WTC11 (cell line): ENCODE measurements at regions of chr20 and their contacts with region 1.

Region 1: DNA sequence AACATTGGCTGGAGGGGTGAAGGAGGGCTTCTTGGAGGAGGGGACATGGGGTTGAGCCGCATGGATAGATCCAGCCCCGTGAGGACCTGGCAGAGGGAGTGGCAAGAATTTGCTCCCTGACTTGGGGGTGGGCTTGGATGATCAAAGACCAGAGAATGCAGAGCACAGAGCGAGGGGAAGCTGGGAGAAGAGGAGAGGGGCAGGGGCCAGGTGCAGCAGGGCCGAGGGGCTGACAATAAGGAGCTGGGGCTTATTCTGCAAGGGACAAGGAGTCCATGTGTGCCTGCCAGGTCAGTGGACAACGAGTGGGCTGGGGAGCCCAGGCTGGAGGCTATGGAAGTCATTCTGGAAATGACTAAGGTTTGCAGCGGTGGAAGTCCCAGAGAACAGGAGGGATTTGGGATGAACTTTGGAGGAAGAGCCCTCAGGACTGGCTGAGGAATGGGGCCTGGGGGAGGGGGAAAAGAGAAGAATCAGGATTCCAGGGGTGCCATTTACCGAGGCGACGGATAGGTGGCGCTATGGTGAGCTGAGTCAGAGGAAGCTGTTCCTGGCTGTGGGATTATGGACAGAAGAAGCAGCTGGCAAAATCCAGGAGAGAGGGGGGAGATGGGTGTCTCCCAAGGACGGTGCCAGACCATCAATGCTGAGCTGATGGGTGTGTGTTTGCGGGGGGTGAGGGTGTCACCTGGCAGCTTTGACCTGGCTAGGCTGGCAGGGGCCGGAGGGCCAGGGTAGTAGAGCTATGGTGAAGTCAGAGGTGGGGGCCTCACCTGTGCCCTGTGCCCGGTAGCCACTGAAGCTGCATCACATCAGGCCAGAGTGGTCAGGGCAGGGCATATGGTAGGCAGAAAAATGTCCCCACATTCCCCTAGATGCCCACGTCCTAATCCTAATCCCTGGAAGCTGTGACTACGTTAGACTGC is 7.8 kb downstream of the KCNG1 start:
- DNase-seq: peak; percentile 89
- ATAC-seq: peak; percentile 87
- H3K4me3 Mint-ChIP-seq: no peak overlapping the region
- H3K27ac Mint-ChIP-seq: no peak overlapping the region
- H3K4me1 Mint-ChIP-seq: peaks cover 29% of the 10 kb centered on the region
- H3K27me3 Mint-ChIP-seq: no peaks in the 10 kb centered on the region
- CTCF ChIP-seq: peak; percentile 71

Region 2: GRCh38 chr20:50980851-50981713 is 34.0 kb before region 1 on chr20:
- CTCF ChIA-PET with region 1: interaction called, 101 read pairs
- POLR2A ChIA-PET with region 1: no interaction called
- DNase-seq: peak; percentile 74
- ATAC-seq: peak; percentile 75
- H3K4me3 Mint-ChIP-seq: 0 out of 2 replicates have a peak overlapping the region, but pooled peaks have one; percentile 29
- H3K27ac Mint-ChIP-seq: no peak overlapping the region
- H3K4me1 Mint-ChIP-seq: peaks cover 3% of the 10 kb centered on the region
- H3K27me3 Mint-ChIP-seq: peaks cover 5% of the 10 kb centered on the region; the same call in 1 of the 2 replicates
- CTCF ChIP-seq: peak; percentile 82

Region 3: DNA sequence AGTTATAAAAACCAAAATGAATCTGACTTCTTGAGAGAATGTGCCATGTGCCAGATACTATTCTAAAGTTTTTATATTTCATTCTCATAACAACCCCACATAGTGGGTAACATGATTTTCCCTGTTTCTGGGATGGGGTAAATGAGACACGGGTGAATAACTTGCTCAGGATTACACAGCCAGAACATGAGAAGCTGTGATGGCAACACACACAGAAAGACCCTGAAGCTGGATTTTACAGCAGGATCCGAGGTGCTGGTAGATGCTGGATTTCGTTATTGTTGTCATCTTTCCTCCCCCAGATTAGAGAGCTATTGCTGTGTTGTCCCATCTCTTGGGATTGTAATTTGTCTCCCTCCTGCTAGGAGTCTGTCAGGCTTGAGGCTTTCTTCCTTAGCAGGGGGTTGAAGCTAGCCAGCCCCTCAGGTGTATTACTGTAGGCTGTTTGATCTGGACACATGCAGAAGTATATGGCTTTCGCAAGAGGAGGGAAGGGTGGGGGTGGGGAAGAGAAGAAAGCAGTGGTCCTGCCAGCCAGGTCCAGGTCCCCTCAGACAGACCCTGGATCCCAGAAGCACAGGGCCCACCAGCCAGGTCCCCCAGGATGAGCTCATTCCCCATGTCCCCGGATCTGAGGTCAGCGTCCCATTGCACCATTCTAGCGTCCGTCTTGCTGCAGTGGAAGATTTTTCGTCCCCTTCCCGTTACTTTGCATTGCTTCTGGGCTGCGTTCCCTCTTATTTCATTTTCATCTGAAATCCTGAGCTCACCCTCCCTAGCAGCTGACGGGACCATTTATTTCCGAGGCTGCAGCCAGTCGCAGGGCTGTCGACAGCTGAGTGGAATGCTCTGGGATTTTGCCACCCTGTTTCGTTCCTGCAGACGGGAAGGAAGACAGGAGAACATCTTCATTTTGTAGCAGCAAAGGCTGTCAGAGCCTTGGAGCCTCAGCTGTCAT is 15.2 kb after region 1 on chr20:
- CTCF ChIA-PET with region 1: interaction called, 39 read pairs
- POLR2A ChIA-PET with region 1: interaction called, 3 read pairs
- DNase-seq: no peak
- ATAC-seq: no peak
- H3K4me3 Mint-ChIP-seq: no peak overlapping the region
- H3K27ac Mint-ChIP-seq: no peak overlapping the region
- H3K4me1 Mint-ChIP-seq: 0 out of 2 replicates have a peak, but pooled peaks cover 3% of the 10 kb centered on the region
- H3K27me3 Mint-ChIP-seq: peaks cover 51% of the 10 kb centered on the region
- CTCF ChIP-seq: no peak

Region 4: GRCh38 chr20:51085761-51086160 is 70.7 kb after region 1 on chr20:
- CTCF ChIA-PET with region 1: interaction called, 10 read pairs
- POLR2A ChIA-PET with region 1: no interaction called
- DNase-seq: no peak
- ATAC-seq: no peak
- H3K4me3 Mint-ChIP-seq: no peak overlapping the region
- H3K27ac Mint-ChIP-seq: no peak overlapping the region
- H3K4me1 Mint-ChIP-seq: peaks cover 23% of the 10 kb centered on the region
- H3K27me3 Mint-ChIP-seq: peaks cover 6% of the 10 kb centered on the region; the same call in 1 of the 2 replicates
- CTCF ChIP-seq: no peak

Region 5: DNA sequence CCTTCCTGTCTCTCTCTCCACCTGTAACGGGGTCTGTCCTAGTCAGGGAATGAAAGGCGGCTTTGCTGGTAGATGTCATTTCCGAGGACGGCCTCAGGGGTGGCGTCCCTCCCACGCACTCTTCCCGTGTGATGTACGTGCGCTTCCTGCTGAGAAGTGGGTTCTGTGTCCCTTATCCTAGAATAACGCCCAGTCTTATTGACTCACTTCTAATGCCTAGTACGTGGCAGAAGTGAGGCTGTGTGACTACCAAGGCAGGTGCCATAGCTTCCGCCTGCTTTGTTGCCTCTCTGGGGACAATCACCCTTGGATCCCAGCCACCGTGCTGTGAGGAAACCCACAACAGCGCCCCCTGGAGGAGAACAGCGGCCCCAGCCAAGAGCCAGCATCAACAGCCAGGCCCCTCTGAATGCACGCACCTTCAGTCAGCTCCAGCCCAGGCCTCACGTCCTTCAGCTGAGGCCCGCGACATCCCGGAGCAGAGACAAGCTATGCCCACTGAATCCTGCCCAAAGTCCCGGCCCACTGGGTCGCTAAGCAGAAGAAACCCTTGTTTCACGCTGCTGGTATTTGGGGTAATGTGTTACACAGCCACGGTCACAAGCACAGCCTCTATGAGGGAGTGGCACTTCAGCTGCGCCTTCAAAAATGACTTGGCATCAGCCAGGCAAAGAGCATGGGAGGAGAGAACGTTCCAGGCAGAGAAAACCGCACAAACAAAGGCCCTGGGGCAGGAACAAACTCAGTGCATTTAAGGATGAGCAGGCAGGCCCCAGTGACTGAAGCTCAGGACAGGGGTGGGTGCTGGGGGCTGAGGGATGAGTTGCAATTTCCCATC is 303.2 kb after region 1 on chr20:
- CTCF ChIA-PET with region 1: interaction called, 24 read pairs
- POLR2A ChIA-PET with region 1: no interaction called
- DNase-seq: peak; percentile 92
- ATAC-seq: peak; percentile 95
- H3K4me3 Mint-ChIP-seq: no peak overlapping the region
- H3K27ac Mint-ChIP-seq: peak overlapping the region; percentile 47; the same call in 1 of the 2 replicates
- H3K4me1 Mint-ChIP-seq: peaks cover 38% of the 10 kb centered on the region
- H3K27me3 Mint-ChIP-seq: peaks cover 24% of the 10 kb centered on the region
- CTCF ChIP-seq: peak; percentile 96